ENCODE measurements at regions of chr6 and their contacts with region 1.

Region 1: GRCh38 chr6:30590994-30591393 is 19.8 kb downstream of the ABCF1 start:
- DNase-seq: no peak
- ATAC-seq: no peak
- H3K4me3 ChIP-seq: no peak overlapping the region
- H3K27ac ChIP-seq: no peak overlapping the region
- H3K4me1 ChIP-seq: no peaks in the 10 kb centered on the region
- H3K27me3 ChIP-seq: no peaks in the 10 kb centered on the region
- CTCF ChIP-seq: no peak
- EP300 ChIP-seq: no peak
- POLR2A ChIP-seq: no peak
- RAD21 ChIP-seq: no peak

Region 2: DNA sequence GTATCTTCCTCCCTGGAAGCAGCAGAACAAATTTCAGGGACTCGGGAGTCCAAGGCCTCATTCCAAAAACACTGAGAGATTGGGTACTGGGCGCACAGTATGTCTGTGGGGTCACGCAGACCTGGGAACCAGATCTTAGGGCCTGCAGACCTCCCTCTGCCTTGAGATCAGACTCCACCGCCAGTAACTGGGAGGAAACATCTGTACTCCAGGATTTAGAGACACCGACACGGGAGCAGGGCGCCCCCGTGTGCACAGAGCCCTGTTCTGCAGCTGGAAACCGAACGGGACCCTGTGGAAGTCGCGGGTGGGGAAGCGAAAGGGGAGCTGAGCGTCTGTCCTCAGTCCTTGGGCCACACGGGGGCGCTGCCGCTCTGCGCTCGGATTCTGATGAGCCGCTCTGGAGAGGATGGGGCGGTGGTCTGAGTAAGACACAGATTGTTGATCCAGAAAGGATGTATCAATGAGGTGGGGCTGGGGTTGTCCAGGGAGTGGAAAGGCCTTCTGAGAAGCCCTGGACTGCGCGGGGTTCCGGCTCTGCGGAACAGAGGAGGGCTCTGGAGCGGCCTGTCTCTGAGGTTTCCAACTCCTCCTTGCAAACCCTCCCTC is 137.4 kb before region 1 on chr6:
- CTCF ChIA-PET with region 1: no interaction called
- POLR2A ChIA-PET with region 1: no interaction called
- in situ Hi-C with region 1: no loop called
- intact Hi-C with region 1: no loop called
- DNase-seq: peak; percentile 84
- ATAC-seq: peak; percentile 89
- H3K4me3 ChIP-seq: no peak overlapping the region
- H3K27ac ChIP-seq: no peak overlapping the region
- H3K4me1 ChIP-seq: peaks cover 17% of the 10 kb centered on the region
- H3K27me3 ChIP-seq: peaks cover 21 to 77% of the 10 kb centered on the region in 2 experiments; a peak in 4 of 5 replicates
- CTCF ChIP-seq: peak; percentile 91
- EP300 ChIP-seq: no peak
- POLR2A ChIP-seq: no peak
- RAD21 ChIP-seq: peak; percentile 86

Region 3: DNA sequence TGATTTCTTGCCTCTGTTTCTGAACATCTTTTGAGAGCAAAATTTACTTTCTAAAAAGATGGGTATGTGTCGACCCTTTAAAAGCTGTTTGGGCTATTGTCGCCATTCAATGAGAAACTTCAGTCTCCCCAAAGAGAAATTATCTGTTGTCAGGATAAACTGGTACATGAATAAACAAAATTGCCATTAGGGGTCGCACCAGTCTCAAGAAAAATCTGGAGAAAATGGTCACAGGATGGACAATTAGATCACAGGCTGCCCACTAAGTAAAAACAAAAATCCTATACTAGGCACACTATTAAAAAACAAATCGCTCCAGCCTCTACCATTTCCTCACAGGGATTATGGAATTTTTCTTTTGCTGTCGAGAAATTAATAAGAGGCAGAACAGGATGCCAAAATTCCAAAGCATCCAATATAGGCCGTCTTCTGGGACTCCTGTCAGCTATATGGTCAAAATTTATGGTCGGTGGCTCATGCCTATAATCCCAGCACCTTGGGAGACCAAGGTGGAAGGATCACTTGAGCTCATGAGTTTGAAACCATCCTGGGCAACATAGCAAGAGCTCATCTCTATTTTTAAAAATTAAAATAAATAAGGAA is 107.2 kb before region 1 on chr6:
- CTCF ChIA-PET with region 1: no interaction called
- POLR2A ChIA-PET with region 1: no interaction called
- in situ Hi-C with region 1: no loop called
- intact Hi-C with region 1: loop called (anchors 2 kb)
- DNase-seq: peak; percentile 66
- ATAC-seq: no peak
- H3K4me3 ChIP-seq: no peak overlapping the region
- H3K27ac ChIP-seq: no peak overlapping the region
- H3K4me1 ChIP-seq: peaks cover 26% of the 10 kb centered on the region
- H3K27me3 ChIP-seq: peaks cover 0 to 29% of the 10 kb centered on the region in 2 experiments; a peak in 3 of 5 replicates
- CTCF ChIP-seq: peak; percentile 81
- EP300 ChIP-seq: no peak
- POLR2A ChIP-seq: no peak
- RAD21 ChIP-seq: peak; percentile 58; the same call in 1 of the 2 replicates

Measured in HepG2 (cell line).